ENCODE measurements at regions of chr1 and their contacts with region 1.

Region 1: GRCh38 chr1:31633053-31633452 is 11.6 kb downstream of the PEF1 start:
- DNase-seq: peak in 2 of 3 donors; percentile 37 to 49
- H3K4me3 ChIP-seq: no peak overlapping the region
- H3K27ac ChIP-seq: no peak overlapping the region
- H3K4me1 ChIP-seq: peaks cover 0 to 3% (median 0%) of the 10 kb centered on the region in 4 experiments
- H3K27me3 ChIP-seq: no peaks in the 10 kb centered on the region

Region 2: DNA sequence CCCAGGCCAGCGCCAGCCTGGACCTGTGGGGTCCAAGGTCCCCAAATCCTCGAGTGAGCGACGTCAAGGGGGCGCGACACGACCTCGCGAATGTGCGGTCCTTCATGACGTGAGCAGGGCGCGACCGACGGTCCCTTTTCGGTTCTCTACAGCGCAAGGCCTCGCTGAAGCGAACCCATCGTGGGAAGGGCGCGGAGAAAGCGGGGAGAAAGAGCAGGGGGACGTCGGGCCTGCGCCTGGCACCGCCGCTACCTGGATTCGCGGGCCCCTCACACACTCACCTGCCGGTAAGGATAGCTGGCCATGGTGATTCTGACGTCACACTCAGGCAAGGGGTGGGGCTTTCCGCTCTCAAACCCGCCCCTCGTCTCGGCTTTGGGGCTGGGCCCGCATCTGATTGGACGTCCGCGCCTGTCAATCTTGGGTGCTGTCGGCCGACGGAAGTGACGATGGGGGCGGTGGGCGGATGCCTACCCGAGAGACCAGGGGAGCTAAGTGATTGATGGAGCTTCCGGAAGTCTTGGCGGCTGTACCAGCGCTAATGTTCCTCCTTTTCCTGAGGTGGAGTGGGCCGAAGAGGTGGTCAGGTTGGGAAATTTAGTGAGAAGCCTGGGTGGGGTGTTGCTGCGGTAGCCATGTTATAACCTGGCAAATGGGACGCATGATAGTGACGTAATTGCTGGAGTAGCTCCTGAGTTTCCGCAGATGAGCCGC is 11.7 kb after region 1 on chr1 and contains the start of gene PEF1:
- CTCF ChIA-PET with region 1: interaction called, 29 read pairs
- POLR2A ChIA-PET with region 1: interaction called, 4 read pairs
- DNase-seq: peak; percentile 99
- H3K4me3 ChIP-seq: peak within 1 kb of the TSS; percentile 82 to 100 (median 92)
- H3K27ac ChIP-seq: peak within 1 kb of the TSS; percentile 99
- H3K4me1 ChIP-seq: peaks cover 11 to 28% (median 25%) of the 10 kb centered on the region in 4 experiments
- H3K27me3 ChIP-seq: no peaks in the 10 kb centered on the region

Measured in common myeloid progenitor, CD34-positive (primary cell).